ENCODE measurements at regions of chr5 and their contacts with region 1.

Region 1: DNA sequence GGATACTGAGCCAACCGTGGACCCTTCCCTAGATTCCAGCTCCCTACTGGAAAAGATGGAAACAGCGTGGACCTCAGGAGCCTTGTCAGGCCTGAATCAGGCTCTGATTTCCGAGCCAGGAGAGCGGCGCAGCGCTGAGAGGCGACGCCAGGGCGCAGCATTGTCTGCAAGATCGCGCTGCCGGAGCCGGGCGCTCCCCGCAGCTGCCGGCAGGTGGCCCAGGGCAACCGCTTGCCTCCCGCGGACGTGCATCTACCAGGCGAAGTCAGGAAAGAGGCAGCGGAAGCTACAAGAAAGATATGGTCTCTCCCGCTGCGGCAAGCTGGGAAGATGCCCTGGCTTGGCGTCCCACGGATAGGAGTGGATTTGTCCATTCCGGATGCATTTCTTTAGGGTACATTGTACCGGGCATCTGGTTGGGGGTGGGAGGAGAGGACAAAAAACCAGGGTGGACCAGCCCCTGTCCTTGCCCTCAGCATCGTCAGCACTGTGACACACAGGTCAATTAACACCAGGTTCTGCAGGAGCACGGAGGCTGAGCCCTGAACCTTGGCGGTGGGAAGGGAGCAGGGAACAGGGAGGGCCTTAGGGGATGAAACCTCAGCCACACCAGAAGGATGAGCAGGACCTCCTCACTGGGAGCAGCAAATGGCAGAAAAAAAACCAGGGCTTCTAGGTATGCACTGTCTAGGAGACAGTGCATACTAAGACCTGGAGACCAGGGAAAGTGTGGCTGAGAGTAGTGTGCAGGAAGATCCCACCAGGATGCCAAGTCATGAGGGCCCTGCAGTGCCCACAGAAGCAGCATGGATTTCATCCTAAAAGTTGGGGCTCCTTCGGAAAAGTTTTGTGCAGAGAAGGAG is 55.9 kb downstream of the SFXN1 start:
- DNase-seq: peak; percentile 94
- ATAC-seq: peak; percentile 95
- H3K4me3 Mint-ChIP-seq: peak overlapping the region; percentile 60
- H3K27ac Mint-ChIP-seq: peak overlapping the region; percentile 83
- H3K4me1 Mint-ChIP-seq: peaks cover 46% of the 10 kb centered on the region
- H3K27me3 Mint-ChIP-seq: no peaks in the 10 kb centered on the region

Region 2: GRCh38 chr5:175464074-175464941 is 70.0 kb before region 1 on chr5:
- CTCF ChIA-PET with region 1: interaction called, 12 read pairs
- POLR2A ChIA-PET with region 1: no interaction called
- intact Hi-C with region 1: no loop called
- DNase-seq: peak; percentile 84
- ATAC-seq: peak; percentile 98
- H3K4me3 Mint-ChIP-seq: no peak overlapping the region
- H3K27ac Mint-ChIP-seq: peak overlapping the region; percentile 34
- H3K4me1 Mint-ChIP-seq: peaks cover 12% of the 10 kb centered on the region
- H3K27me3 Mint-ChIP-seq: peaks cover 6% of the 10 kb centered on the region

Region 3: GRCh38 chr5:175501759-175502339 is 32.5 kb before region 1 on chr5:
- CTCF ChIA-PET with region 1: no interaction called
- POLR2A ChIA-PET with region 1: no interaction called
- intact Hi-C with region 1: no loop called
- DNase-seq: no peak
- ATAC-seq: no peak
- H3K4me3 Mint-ChIP-seq: no peak overlapping the region
- H3K27ac Mint-ChIP-seq: peak overlapping the region; percentile 56
- H3K4me1 Mint-ChIP-seq: peaks cover 54% of the 10 kb centered on the region
- H3K27me3 Mint-ChIP-seq: no peaks in the 10 kb centered on the region

Region 4: DNA sequence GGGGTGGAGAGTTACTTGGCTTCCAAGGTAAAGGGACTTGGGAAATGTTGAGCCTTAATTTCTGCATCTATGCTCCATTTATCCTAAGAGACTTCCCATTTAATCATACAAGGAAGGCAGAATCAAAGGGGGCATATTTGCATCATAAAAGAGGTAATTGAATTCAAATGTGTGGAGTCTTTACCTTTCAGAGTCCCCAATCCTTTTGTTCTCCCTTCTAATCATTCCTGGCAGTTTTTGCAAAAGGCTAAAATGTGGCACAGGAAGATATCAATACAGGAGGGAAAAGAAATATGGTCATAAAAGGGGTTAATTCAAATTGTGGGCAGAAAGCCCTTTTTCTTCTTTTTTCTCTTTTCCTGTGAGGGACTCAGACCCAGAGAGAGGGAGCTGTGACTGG is 13.5 kb after region 1 on chr5:
- CTCF ChIA-PET with region 1: interaction called, 21 read pairs
- POLR2A ChIA-PET with region 1: no interaction called
- intact Hi-C with region 1: no loop called
- DNase-seq: no peak
- ATAC-seq: no peak
- H3K4me3 Mint-ChIP-seq: no peak overlapping the region
- H3K27ac Mint-ChIP-seq: no peak overlapping the region
- H3K4me1 Mint-ChIP-seq: peaks cover 9% of the 10 kb centered on the region
- H3K27me3 Mint-ChIP-seq: peaks cover 12% of the 10 kb centered on the region

Region 5: GRCh38 chr5:175657593-175658271 is 123.4 kb after region 1 on chr5 and contains the start of gene HRH2:
- CTCF ChIA-PET with region 1: interaction called, 4 read pairs
- POLR2A ChIA-PET with region 1: interaction called, 4 read pairs
- intact Hi-C with region 1: loop called in 1 of 2 experiments (anchors 1 kb)
- DNase-seq: peak; percentile 76
- ATAC-seq: peak; percentile 46
- H3K4me3 Mint-ChIP-seq: peak within 1 kb of the TSS; percentile 93
- H3K27ac Mint-ChIP-seq: peak within 1 kb of the TSS; percentile 94
- H3K4me1 Mint-ChIP-seq: peaks cover 75% of the 10 kb centered on the region
- H3K27me3 Mint-ChIP-seq: no peaks in the 10 kb centered on the region
- total RNA-seq, gene HRH2: 12.3 to 16.9 TPM

Region 6: GRCh38 chr5:175689147-175689991 is 155.1 kb after region 1 on chr5:
- CTCF ChIA-PET with region 1: interaction called, 84 read pairs
- POLR2A ChIA-PET with region 1: no interaction called
- intact Hi-C with region 1: no loop called
- DNase-seq: no peak
- ATAC-seq: no peak
- H3K4me3 Mint-ChIP-seq: no peak overlapping the region
- H3K27ac Mint-ChIP-seq: no peak overlapping the region
- H3K4me1 Mint-ChIP-seq: peaks cover 34% of the 10 kb centered on the region
- H3K27me3 Mint-ChIP-seq: no peaks in the 10 kb centered on the region

Region 7: DNA sequence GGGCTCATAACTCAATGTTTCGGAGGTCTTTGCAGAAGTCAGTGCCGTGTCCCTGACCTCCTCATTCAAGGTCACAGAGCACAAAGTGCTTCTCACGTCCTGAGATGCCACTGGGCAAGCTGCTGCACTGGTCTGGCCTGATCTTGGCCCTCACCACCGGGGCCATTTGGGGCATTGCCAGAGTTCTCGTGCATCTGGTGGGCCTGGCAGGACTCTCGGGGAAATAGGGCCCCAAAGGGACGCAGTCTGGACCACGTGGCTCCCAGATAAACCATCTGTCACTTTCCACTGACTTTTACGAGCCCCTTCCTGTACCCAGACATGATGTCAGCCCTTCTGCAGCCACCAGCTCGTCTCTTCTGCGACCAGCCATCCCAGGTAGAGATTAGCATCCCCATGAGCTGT is 178.4 kb after region 1 on chr5:
- CTCF ChIA-PET with region 1: interaction called, 70 read pairs
- POLR2A ChIA-PET with region 1: no interaction called
- intact Hi-C with region 1: no loop called
- DNase-seq: no peak
- ATAC-seq: no peak
- H3K4me3 Mint-ChIP-seq: no peak overlapping the region
- H3K27ac Mint-ChIP-seq: no peak overlapping the region
- H3K4me1 Mint-ChIP-seq: peaks cover 7% of the 10 kb centered on the region
- H3K27me3 Mint-ChIP-seq: no peaks in the 10 kb centered on the region

Region 8: GRCh38 chr5:175729829-175730277 is 195.6 kb after region 1 on chr5:
- CTCF ChIA-PET with region 1: interaction called, 87 read pairs
- POLR2A ChIA-PET with region 1: no interaction called
- intact Hi-C with region 1: loop called in 1 of 2 experiments (anchors 1 kb)
- DNase-seq: peak; percentile 95
- ATAC-seq: peak; percentile 97
- H3K4me3 Mint-ChIP-seq: no peak overlapping the region
- H3K27ac Mint-ChIP-seq: no peak overlapping the region
- H3K4me1 Mint-ChIP-seq: peaks cover 5% of the 10 kb centered on the region
- H3K27me3 Mint-ChIP-seq: peaks cover 15% of the 10 kb centered on the region